Dorsolateral prefrontal cortex (tissue), 120 donors: ENCODE measurements at regions of chr4 and their contacts with region 1.

Region 1: DNA sequence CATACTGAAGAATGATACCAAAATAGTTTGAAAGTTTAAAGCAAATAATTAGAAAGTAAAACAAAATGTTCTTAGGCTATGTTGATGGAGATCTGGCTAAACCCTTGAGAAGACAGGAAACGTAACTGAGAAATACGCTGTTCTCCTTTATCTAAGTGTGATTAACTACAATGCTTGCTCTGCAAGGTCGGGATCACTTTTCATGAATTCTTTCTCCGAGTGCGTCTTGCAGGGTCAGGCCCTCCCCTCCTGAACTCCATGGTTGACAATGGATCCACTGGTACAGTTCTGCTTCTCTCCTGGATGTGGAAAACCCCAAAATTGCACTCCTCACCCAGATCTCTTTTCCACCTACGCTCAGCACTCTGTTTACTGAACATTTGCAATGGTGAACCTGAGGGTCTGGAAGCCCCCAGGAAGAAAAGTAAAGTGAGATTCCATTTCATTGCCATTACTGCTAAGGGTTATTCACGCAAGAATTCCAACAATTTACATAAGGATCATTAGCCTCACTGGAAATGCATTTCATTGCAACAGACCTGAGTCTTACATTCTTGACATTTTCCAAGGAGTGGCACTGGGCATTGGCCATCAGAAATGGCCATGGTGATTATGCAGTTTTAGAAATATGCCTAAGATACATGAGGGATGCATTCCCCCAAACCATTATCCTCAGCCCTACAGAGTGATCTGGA is 24.6 kb upstream of the WWC2 start:
- DNase-seq: no peak
- H3K4me3 ChIP-seq: no peak overlapping the region
- H3K27ac ChIP-seq: no peak overlapping the region
- H3K27me3 ChIP-seq: no peaks in the 10 kb centered on the region
- CTCF ChIP-seq: no peak

Region 2: DNA sequence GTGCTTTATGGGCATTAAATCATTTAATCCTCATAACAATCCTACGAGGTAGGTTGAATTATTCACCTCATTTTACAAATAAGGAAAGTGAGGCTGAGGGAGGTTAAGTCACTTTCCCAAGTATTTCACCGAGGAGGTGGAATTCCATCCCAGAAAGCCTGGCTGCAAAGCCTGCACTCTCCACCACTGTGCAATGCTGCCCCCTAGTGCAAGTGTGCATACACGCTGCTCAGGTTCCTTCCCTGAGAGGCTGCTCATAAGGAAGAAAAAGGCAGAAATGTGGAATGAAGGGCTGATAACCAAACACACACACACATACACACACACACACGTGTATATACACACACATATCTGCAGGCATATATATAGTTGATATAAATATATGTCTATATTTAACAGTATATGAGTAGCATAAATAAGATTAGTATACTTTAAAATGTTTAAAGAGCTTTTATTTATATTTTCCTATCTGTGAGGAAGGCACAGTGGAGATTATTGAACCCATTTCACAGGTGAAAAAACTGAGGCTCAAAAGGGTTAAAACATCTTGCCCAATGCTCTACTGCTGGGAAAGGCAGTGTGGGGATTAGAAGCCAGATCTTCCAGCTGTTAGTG is 1545.8 kb before region 1 on chr4:
- intact Hi-C with region 1: no loop called
- DNase-seq: peak; percentile 34 to 79 (median 72)
- H3K4me3 ChIP-seq: no peak overlapping the region
- H3K27ac ChIP-seq: no peak overlapping the region
- H3K27me3 ChIP-seq: peaks cover 0 to 47% (median 4%) of the 10 kb centered on the region in 45 donors
- CTCF ChIP-seq: peak; percentile 63 to 94 (median 86)

Region 3: DNA sequence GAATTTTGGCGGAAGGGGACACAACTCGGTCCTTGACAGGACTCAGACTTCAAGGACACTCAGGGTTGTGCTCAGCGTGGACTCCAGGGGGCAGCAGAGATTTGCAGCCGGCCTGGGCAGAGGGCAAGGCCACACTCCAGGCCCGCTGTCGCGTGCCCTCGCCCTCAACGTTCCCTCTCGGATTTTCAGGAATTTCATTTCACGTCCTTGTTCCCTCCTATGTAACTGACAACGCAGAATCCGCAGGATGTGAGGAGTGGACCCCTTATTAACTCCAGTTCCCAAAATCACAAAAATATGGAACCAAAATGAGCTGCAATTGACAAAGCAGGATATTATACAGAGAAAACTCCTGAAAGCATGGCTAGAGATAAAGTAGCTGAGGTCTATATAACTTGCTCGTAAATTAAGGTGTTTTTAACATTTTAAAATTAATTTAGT is 136.2 kb before region 1 on chr4:
- intact Hi-C with region 1: loop called in 1 of 2 experiments (anchors 10 kb)
- DNase-seq: peak; percentile 23 to 82 (median 65)
- H3K4me3 ChIP-seq: no peak overlapping the region
- H3K27ac ChIP-seq: no peak overlapping the region
- H3K27me3 ChIP-seq: peaks cover 0 to 13% (median 0%) of the 10 kb centered on the region in 45 donors
- CTCF ChIP-seq: peak; percentile 42 to 93 (median 84)

Region 4: GRCh38 chr4:183249857-183250256 is 175.4 kb after region 1 on chr4:
- intact Hi-C with region 1: loop called in 1 of 2 experiments (anchors 2 kb)
- DNase-seq: no peak
- H3K4me3 ChIP-seq: no peak overlapping the region
- H3K27ac ChIP-seq: no peak overlapping the region
- H3K27me3 ChIP-seq: no peaks in the 10 kb centered on the region
- CTCF ChIP-seq: peak in 54 of 56 donors; percentile 35 to 76 (median 56)

Region 5: DNA sequence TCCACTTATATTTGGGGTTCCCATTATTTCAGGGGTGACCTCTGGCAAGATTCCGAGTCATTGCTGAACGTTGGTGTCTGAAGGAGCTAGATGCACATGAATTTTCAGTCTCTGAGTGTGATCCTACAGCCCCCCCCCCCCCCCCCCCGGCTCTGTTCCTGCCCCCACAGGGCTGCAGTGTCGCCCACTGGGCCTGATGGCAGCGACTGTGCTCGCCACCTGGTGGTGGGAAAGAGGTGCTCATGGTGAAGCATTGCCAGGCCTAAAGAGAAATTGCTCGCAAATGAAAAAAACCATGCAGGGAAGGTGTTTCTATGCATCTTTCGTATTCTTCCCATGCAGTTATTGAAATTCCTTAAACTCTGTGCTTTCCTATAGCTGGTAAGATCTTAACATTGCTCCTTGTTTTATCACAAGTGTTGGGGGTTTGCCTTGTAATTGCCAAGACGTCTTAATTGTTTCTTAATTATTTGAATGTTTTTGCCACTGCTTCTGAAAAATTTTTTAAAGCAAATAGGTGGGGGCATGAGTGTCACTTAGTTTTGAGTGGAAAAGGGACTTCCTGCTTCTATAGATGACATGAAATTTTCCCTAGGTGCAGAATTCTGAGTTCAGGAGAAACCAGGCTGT is 182.4 kb after region 1 on chr4:
- intact Hi-C with region 1: loop called in 1 of 2 experiments (anchors 2 kb)
- DNase-seq: peak in 6 of 10 donors; percentile 28 to 67 (median 51)
- H3K4me3 ChIP-seq: peak overlapping the region in 2 of 59 donors; percentile 4 to 15
- H3K27ac ChIP-seq: peak overlapping the region in 21 of 59 donors; percentile 0 to 60 (median 32)
- H3K27me3 ChIP-seq: no peaks in the 10 kb centered on the region
- CTCF ChIP-seq: peak in 55 of 56 donors; percentile 50 to 90 (median 74)

Region 6: GRCh38 chr4:183398227-183399125 is 324.0 kb after region 1 on chr4:
- intact Hi-C with region 1: loop called in 1 of 2 experiments (anchors 10 kb)
- DNase-seq: peak; percentile 45 to 82 (median 60)
- H3K4me3 ChIP-seq: peak overlapping the region; percentile 11 to 80 (median 66)
- H3K27ac ChIP-seq: peak overlapping the region in 38 of 59 donors; percentile 2 to 84 (median 64)
- H3K27me3 ChIP-seq: no peaks in the 10 kb centered on the region
- CTCF ChIP-seq: peak in 54 of 56 donors; percentile 13 to 69 (median 52)

Region 7: DNA sequence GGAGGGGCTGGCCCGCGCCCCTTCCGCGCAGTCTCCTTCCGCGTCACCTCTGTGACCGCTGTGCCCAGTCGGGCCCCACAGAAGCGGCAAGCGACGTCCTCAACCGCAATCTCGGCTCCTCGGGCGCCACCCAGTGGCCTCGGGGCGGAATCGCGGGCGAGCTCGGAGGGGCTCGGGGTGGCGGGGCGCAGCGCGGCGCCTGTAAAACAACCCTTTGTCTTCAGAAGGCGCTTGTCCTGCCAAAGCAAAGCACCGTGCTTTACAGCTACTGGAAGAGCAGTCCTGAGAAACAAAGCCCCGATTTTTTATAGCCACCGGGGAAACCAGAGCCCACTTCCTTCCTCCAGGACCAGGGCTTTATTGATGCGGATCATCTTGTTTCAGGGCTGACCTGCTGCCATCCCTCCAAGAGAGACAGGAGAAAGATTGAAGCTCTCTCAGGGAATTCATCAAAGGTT is 332.7 kb after region 1 on chr4:
- intact Hi-C with region 1: loop called in 1 of 2 experiments (anchors 5 kb)
- DNase-seq: peak; percentile 76 to 94 (median 86)
- H3K4me3 ChIP-seq: peak overlapping the region; percentile 32 to 73 (median 53)
- H3K27ac ChIP-seq: peak overlapping the region in 58 of 59 donors; percentile 23 to 94 (median 86)
- H3K27me3 ChIP-seq: no peaks in the 10 kb centered on the region
- CTCF ChIP-seq: peak; percentile 85 to 99 (median 97)